A549 (cell line): ENCODE measurements at regions of chr12 and their contacts with region 1.

Region 1: GRCh38 chr12:107670999-107671643 is 14.5 kb upstream of the PWP1 start:
- DNase-seq: peak in 1 of 2 experiments; percentile 48
- ATAC-seq: peak; percentile 49 to 79; a peak in 4 of 6 replicates
- H3K4me3 ChIP-seq: no peak overlapping the region
- H3K27ac ChIP-seq: no peak overlapping the region
- H3K4me1 ChIP-seq: no peaks in the 10 kb centered on the region
- CTCF ChIP-seq: peak; percentile 51
- EP300 ChIP-seq: no peak
- POLR2A ChIP-seq: no peak
- RAD21 ChIP-seq: no peak

Region 2: DNA sequence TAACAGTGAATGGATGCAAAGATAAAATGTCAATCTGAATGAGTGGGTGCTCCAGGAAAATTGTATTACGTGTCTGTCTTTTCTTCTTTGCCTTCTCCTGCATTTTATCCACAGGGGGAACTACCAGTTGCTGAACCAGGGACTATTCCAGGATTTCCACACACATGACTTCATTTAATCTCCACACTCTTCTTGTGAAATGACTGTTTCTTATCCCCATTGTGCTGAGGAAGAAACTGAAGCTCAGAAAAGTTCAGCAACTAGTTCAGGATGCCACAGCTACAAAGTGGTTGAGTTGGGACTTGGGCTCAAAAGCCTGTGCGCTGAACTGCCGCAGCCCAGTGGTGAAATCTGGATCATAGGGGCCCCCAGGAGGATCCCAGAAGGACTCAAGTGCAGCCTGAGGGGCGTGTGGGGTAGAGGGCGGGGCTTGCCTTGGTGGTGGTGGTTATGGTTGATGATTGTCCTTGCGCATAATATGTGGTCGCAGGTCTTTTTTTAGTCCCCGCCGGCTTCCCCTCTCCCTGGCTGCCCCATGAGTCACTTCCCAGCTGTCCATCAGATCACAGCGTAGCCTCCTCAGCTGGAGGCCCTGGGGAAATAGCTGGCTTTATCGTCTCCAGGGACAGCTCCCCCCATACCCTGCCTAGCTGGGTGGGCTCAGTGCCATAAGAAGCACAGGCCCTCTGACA is 342.5 kb before region 1 on chr12:
- CTCF ChIA-PET with region 1: no interaction called
- POLR2A ChIA-PET with region 1: interaction called, 10 read pairs
- DNase-seq: peak; percentile 31 to 49
- ATAC-seq: peak; percentile 70 to 73
- H3K4me3 ChIP-seq: no peak overlapping the region; the same call in 2 of the 3 replicates
- H3K27ac ChIP-seq: peak overlapping the region; percentile 48 to 82
- H3K4me1 ChIP-seq: peaks cover 82% of the 10 kb centered on the region
- CTCF ChIP-seq: no peak
- EP300 ChIP-seq: no peak
- POLR2A ChIP-seq: no peak
- RAD21 ChIP-seq: no peak

Region 3: DNA sequence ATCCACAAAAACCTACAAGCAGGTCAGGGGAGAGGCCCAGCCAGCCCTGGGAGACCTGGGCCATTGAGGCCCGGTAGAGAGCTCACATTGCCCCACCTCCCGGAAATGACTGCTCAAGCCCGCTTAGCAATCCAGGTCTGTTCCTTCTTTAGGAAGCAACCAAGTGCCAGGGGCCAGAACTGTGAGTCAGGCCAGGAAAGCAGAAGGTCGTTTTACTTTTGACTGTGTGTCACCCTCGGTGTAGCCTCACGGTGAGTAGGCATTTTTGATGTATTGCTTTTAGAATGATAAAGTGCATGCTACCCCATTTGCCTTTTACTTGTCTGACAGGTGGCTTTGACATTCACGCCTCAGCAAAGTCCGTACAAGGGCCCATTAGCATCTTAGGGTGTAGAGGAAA is 10.9 kb before region 1 on chr12:
- CTCF ChIA-PET with region 1: interaction called, 15 read pairs
- POLR2A ChIA-PET with region 1: interaction called, 3 read pairs
- DNase-seq: peak in 1 of 2 experiments; percentile 21
- ATAC-seq: peak; percentile 28 to 33; a peak in 1 of 6 replicates
- H3K4me3 ChIP-seq: no peak overlapping the region
- H3K27ac ChIP-seq: no peak overlapping the region
- H3K4me1 ChIP-seq: no peaks in the 10 kb centered on the region
- CTCF ChIP-seq: no peak
- EP300 ChIP-seq: no peak
- POLR2A ChIP-seq: no peak
- RAD21 ChIP-seq: no peak

Region 4: DNA sequence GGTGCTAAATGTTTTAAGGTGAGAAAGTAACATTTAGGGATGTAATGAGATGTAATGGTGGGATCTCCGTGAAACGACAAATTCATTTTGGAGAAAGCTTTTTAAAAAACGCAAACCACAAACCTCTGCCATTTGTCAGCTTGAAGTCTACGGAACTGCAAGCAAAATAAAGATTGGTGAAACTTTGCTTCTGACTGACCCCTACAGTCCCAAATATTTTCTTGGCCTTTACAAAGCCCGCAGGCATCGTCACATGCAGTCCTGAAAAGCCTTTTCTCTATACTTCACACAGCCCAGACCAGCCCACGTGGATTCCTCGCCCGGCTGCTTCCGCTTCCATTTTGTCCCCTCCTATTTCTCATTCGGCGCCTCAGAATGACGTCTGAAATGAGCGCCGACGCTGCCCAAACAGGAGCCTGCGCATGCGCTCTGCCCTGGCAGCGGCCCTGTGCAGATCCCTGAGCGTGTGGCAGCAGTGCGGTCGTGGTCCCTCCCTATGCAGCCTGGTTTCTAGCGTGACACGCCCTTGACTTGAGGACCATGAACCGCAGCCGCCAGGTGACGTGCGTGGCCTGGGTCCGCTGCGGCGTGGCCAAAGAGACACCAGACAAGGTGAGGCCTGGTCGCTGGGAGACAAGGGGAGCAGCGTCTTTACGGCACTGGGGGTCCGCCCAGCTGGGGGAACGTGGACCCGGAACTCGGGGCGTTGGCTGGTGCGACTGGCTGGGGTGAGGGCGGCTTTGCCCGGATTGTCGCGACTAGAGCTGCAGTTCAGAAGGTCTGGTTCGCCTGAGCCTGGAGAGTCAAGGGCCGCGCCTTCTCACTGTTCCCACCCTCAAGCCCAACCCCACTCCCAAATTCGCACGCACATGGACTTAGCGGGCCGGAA is 14.5 kb after region 1 on chr12 and contains the start of gene PWP1:
- CTCF ChIA-PET with region 1: interaction called, 13 read pairs
- POLR2A ChIA-PET with region 1: interaction called, 3 read pairs
- DNase-seq: peak; percentile 91 to 97
- ATAC-seq: peak; percentile 84 to 96
- H3K4me3 ChIP-seq: peak within 1 kb of the TSS; percentile 88
- H3K27ac ChIP-seq: peak within 1 kb of the TSS; percentile 85 to 93
- H3K4me1 ChIP-seq: peaks cover 14% of the 10 kb centered on the region
- CTCF ChIP-seq: no peak
- EP300 ChIP-seq: no peak
- POLR2A ChIP-seq: peak; percentile 92
- RAD21 ChIP-seq: no peak
- polyA plus RNA-seq, gene PWP1: 115 and 191 TPM in 2 replicates

Region 5: GRCh38 chr12:107864235-107864634 is 193.1 kb after region 1 on chr12:
- CTCF ChIA-PET with region 1: no interaction called
- POLR2A ChIA-PET with region 1: no interaction called
- DNase-seq: no peak
- ATAC-seq: no peak
- H3K4me3 ChIP-seq: no peak overlapping the region
- H3K27ac ChIP-seq: no peak overlapping the region
- H3K4me1 ChIP-seq: no peaks in the 10 kb centered on the region
- CTCF ChIP-seq: no peak
- EP300 ChIP-seq: no peak
- POLR2A ChIP-seq: no peak
- RAD21 ChIP-seq: no peak

Region 6: GRCh38 chr12:107884769-107885694 is 213.9 kb after region 1 on chr12:
- CTCF ChIA-PET with region 1: interaction called, 49 read pairs
- POLR2A ChIA-PET with region 1: no interaction called
- DNase-seq: peak; percentile 43 to 61
- ATAC-seq: peak; percentile 75 to 91
- H3K4me3 ChIP-seq: no peak overlapping the region
- H3K27ac ChIP-seq: no peak overlapping the region
- H3K4me1 ChIP-seq: no peaks in the 10 kb centered on the region
- CTCF ChIP-seq: peak; percentile 70
- EP300 ChIP-seq: no peak
- POLR2A ChIP-seq: no peak
- RAD21 ChIP-seq: peak; percentile 73 to 81